Heart left ventricle (tissue), 16 donors: ENCODE measurements at regions of chr5 and their contacts with region 1.

Region 1: DNA sequence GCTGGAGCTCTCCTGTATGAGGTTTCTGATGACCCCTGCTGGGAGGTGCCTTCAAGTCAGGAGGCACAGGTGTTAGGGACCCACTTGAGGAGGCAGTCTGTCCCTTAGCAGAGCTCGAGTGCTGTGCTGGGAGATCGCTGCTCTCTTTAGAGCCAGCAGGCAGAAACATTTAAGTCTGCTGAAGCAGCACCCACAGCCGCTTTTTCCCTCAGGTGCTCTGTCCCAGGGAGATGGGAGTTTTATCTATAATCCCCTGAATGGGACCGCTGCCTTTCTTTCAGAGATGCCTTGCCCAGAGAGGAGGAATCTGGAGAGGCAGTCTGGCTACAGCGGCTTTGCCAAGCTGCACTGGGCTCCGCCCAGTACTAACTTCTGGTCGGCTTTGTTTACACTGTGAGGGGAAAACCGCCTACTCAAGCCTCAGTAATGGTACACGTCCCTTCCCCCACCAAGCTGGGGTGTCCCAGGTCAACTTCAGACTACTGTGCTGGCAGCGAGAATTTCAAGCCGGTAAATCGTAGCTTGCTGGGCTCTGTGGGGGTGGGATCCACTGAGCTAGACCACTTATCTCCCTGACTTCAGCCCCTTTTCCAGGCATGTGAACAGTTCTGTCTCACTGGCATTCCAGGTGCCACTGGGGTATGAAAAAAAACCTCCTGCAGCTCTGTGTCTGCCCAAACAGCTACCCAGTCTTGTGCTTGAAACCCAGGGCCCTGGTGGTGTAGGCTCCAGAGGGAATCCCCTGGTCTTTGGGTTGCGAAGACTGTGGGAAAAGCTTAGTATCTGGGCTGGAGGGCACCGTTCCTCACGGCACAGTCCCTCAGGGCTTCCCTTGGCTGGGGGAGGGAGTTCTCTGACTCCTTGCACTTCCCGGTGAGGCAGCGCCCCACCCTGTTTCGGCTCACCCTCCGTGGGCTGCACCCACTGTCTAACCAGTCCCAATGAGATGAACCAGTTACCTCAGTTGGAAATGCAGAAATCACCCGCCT is 171.1 kb downstream of the CWC27 start:
- DNase-seq: peak in 2 of 5 donors; percentile 17 to 24
- ATAC-seq: peak in 2 of 4 donors; percentile 39 to 45
- H3K4me3 ChIP-seq: no peak overlapping the region
- H3K27ac ChIP-seq: peak overlapping the region in 1 of 12 donors; percentile 4
- H3K4me1 ChIP-seq: no peaks in the 10 kb centered on the region
- H3K27me3 ChIP-seq: no peaks in the 10 kb centered on the region
- CTCF ChIP-seq: no peak
- POLR2A ChIP-seq: no peak

Region 2: DNA sequence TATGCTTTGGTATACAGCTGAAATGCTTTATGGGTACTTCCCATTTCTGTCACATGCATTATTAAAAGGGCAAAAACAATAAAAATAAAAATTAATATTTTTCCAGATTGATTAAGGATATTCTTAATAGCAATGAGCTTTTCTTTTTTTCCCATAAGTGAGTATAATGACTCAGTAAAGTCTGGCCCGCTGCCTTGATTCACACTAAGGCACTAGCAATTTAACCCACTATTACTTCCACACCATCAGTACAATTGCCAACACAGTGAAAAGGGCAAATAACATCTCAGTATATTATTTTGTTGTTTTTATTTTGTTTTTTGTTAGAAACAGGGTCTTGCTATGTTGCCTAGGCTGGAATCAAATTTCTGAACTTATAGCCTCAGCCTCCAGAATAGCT is 624.0 kb before region 1 on chr5:
- intact Hi-C with region 1: no loop called
- DNase-seq: no peak
- ATAC-seq: no peak
- H3K4me3 ChIP-seq: no peak overlapping the region
- H3K27ac ChIP-seq: no peak overlapping the region
- H3K4me1 ChIP-seq: no peaks in the 10 kb centered on the region
- H3K27me3 ChIP-seq: no peaks in the 10 kb centered on the region
- CTCF ChIP-seq: no peak
- POLR2A ChIP-seq: no peak

Region 3: DNA sequence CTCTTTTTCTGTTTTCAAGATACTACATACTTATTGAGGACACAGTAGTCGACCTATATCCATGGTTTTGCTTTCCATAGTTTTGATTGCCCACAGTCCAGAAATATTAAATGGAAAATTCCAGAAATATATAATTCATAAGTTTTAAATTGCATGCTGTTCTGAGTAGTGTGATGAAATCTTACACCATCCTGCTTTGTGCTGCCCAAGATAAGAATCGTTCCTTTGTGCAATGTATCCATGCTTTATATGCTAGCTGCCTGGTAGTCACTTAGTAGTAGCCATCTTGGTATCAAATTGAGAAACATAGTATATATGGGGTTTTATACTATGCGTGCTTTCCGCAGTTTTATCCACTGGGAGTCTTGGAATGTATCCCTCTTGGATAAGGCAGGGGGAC is 112.1 kb before region 1 on chr5:
- intact Hi-C with region 1: loop called in 1 of 10 experiments (anchors 10 kb)
- DNase-seq: no peak
- ATAC-seq: no peak
- H3K4me3 ChIP-seq: no peak overlapping the region
- H3K27ac ChIP-seq: no peak overlapping the region
- H3K4me1 ChIP-seq: peaks cover 0 to 19% (median 8%) of the 10 kb centered on the region in 12 donors
- H3K27me3 ChIP-seq: no peaks in the 10 kb centered on the region
- CTCF ChIP-seq: no peak
- POLR2A ChIP-seq: no peak

Region 4: DNA sequence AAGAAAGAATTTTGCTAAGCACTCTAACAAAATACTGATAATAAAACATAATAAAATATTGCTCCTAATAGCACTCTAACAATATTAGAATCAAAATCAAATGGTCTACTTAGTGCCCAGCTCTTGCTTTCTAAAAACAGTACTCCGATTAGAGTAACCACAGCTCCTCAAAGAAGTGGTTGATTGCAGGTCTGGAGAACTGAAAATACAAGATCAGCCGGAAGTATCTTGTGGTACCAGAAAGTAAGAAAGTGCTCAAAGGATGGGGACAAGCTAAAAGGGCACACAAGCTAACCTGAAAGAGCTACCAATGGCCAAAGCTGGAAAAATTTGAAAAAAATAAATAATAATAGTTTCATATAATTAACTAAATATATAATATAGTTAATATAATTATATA is 51.9 kb before region 1 on chr5:
- intact Hi-C with region 1: no loop called
- DNase-seq: no peak
- ATAC-seq: no peak
- H3K4me3 ChIP-seq: no peak overlapping the region
- H3K27ac ChIP-seq: no peak overlapping the region
- H3K4me1 ChIP-seq: no peaks in the 10 kb centered on the region
- H3K27me3 ChIP-seq: no peaks in the 10 kb centered on the region
- CTCF ChIP-seq: no peak
- POLR2A ChIP-seq: no peak

Region 5: GRCh38 chr5:65418661-65419060 is 478.8 kb after region 1 on chr5:
- intact Hi-C with region 1: no loop called
- DNase-seq: no peak
- ATAC-seq: no peak
- H3K4me3 ChIP-seq: no peak overlapping the region
- H3K27ac ChIP-seq: no peak overlapping the region
- H3K4me1 ChIP-seq: no peaks in the 10 kb centered on the region
- H3K27me3 ChIP-seq: no peaks in the 10 kb centered on the region
- CTCF ChIP-seq: no peak
- POLR2A ChIP-seq: no peak